ENCODE measurements at regions of chr20 and their contacts with region 1.

Region 1: GRCh38 chr20:49132995-49133478 is 55.1 kb downstream of the STAU1 start:
- DNase-seq: peak; percentile 8 to 50
- H3K4me3 ChIP-seq: no peak overlapping the region
- H3K27ac ChIP-seq: no peak overlapping the region
- H3K4me1 ChIP-seq: no peaks in the 10 kb centered on the region
- H3K27me3 ChIP-seq: no peaks in the 10 kb centered on the region
- CTCF ChIP-seq: peak; percentile 83

Region 2: GRCh38 chr20:47767972-47768794 is 1364.9 kb before region 1 on chr20:
- CTCF ChIA-PET with region 1: interaction called, 22 read pairs
- POLR2A ChIA-PET with region 1: no interaction called
- intact Hi-C with region 1: no loop called
- DNase-seq: no peak
- H3K4me3 ChIP-seq: no peak overlapping the region
- H3K27ac ChIP-seq: no peak overlapping the region
- H3K4me1 ChIP-seq: 0 out of 2 replicates have a peak, but pooled peaks cover 5% of the 10 kb centered on the region
- H3K27me3 ChIP-seq: no peaks in the 10 kb centered on the region
- CTCF ChIP-seq: no peak

Region 3: GRCh38 chr20:48921151-48921898 is 211.7 kb before region 1 on chr20 and contains the start of gene ARFGEF2:
- CTCF ChIA-PET with region 1: no interaction called
- POLR2A ChIA-PET with region 1: no interaction called
- intact Hi-C with region 1: no loop called
- DNase-seq: peak; percentile 82 to 97
- H3K4me3 ChIP-seq: peak within 1 kb of the TSS; percentile 65
- H3K27ac ChIP-seq: peak within 1 kb of the TSS; percentile 90
- H3K4me1 ChIP-seq: peaks cover 36% of the 10 kb centered on the region
- H3K27me3 ChIP-seq: no peaks in the 10 kb centered on the region
- CTCF ChIP-seq: peak; percentile 7; the same call in 1 of the 2 replicates
- total RNA-seq, gene ARFGEF2: 39.9 and 47.0 TPM in 2 replicates

Region 4: GRCh38 chr20:49219089-49219923 is 86.3 kb after region 1 on chr20 and contains the start of gene DDX27:
- CTCF ChIA-PET with region 1: interaction called, 13 read pairs
- POLR2A ChIA-PET with region 1: no interaction called
- intact Hi-C with region 1: loop called (anchors 1 kb)
- DNase-seq: peak; percentile 96 to 98
- H3K4me3 ChIP-seq: peak within 1 kb of the TSS; percentile 71
- H3K27ac ChIP-seq: peak within 1 kb of the TSS; percentile 53
- H3K4me1 ChIP-seq: peaks cover 12% of the 10 kb centered on the region
- H3K27me3 ChIP-seq: no peaks in the 10 kb centered on the region
- CTCF ChIP-seq: no peak
- total RNA-seq, gene DDX27: 50.6 and 64.4 TPM in 2 replicates

Region 5: DNA sequence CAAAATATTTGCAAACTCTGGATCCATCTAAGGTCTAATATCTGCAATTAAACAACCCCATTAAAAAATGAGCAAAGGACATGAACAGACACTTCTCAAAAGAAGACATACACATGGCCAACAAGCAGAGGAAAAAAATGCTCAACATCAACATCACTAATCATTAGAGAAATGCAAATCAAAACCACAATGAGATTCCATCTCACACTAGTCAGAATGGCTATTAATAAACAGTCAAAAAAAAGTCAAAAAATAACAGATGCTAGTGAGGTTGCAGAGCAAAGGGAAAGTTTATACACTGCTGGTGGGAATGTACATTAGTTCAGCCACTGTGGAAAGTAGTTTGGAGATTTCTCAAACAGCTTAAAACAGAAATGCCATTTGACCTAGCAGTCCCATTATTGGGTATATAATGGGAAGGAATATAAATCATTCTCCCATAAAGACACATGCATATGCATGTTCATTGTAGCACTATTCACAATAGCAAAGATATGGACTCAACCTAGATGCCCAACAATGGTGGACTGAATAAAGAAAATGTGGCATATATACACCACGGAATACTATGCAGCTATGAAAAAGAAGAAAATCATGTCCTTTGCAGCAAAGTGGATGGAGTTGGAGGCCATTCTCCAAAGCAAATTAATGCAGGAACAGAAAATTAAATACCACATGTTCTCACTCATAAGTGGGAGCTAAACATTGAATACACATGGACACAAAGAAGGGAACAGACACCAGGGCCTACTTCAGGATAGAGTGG is 135.7 kb after region 1 on chr20:
- CTCF ChIA-PET with region 1: no interaction called
- POLR2A ChIA-PET with region 1: interaction called, 11 read pairs
- intact Hi-C with region 1: no loop called
- DNase-seq: no peak
- H3K4me3 ChIP-seq: peak overlapping the region; percentile 1; the same call in 1 of the 2 replicates
- H3K27ac ChIP-seq: no peak overlapping the region
- H3K4me1 ChIP-seq: peaks cover 25% of the 10 kb centered on the region
- H3K27me3 ChIP-seq: no peaks in the 10 kb centered on the region
- CTCF ChIP-seq: no peak

Region 6: DNA sequence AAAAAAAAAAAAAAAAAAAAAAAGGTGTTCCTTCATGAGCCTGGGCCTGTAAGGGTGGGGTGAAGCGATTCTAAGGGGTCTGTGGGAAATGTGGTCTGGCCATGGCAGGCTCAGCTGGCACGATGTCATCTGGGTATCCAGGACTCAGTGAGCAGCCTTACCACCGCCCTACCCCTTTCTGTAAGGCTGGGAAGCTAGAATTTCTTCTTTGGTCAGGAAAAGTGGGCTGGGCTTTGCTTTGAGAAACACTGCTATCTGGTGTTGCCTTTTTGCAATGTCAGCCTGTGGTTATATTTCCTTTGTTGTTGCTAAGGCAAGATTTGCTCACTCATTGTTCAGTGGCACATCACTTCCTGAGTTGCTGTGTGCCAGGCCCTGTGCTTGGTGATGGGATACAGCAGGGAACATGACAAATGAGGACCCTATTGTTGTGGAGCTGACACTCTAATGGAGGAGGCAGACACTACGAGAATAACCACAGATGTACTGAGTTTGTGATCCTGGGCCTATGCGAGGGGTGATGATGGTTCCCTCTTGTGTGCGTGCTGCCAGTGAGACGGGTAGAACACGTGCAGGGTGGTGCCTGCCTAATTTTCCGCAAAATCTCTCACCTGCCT is 190.7 kb after region 1 on chr20:
- CTCF ChIA-PET with region 1: no interaction called
- POLR2A ChIA-PET with region 1: no interaction called
- intact Hi-C with region 1: loop called (anchors 1 kb)
- DNase-seq: peak; percentile 58 to 66
- H3K4me3 ChIP-seq: no peak overlapping the region
- H3K27ac ChIP-seq: no peak overlapping the region
- H3K4me1 ChIP-seq: no peaks in the 10 kb centered on the region
- H3K27me3 ChIP-seq: peaks cover 27% of the 10 kb centered on the region
- CTCF ChIP-seq: peak; percentile 48; the same call in 1 of the 2 replicates